ENCODE measurements at regions of chr1 and their contacts with region 1.

Region 1: GRCh38 chr1:116737020-116737854 is 17.0 kb upstream of the CD2 start:
- DNase-seq: peak; percentile 72 to 82 (median 78)
- ATAC-seq: peak; percentile 92
- H3K4me3 ChIP-seq: no peak overlapping the region
- H3K27ac ChIP-seq: no peak overlapping the region
- H3K4me1 ChIP-seq: peaks cover 0 to 8% of the 10 kb centered on the region in 2 experiments; a peak in 2 of 5 replicates
- H3K27me3 ChIP-seq: no peaks in the 10 kb centered on the region
- CTCF ChIP-seq: peak; percentile 95 to 97 (median 97)
- EP300 ChIP-seq: no peak
- POLR2A ChIP-seq: no peak
- RAD21 ChIP-seq: peak; percentile 99

Region 2: DNA sequence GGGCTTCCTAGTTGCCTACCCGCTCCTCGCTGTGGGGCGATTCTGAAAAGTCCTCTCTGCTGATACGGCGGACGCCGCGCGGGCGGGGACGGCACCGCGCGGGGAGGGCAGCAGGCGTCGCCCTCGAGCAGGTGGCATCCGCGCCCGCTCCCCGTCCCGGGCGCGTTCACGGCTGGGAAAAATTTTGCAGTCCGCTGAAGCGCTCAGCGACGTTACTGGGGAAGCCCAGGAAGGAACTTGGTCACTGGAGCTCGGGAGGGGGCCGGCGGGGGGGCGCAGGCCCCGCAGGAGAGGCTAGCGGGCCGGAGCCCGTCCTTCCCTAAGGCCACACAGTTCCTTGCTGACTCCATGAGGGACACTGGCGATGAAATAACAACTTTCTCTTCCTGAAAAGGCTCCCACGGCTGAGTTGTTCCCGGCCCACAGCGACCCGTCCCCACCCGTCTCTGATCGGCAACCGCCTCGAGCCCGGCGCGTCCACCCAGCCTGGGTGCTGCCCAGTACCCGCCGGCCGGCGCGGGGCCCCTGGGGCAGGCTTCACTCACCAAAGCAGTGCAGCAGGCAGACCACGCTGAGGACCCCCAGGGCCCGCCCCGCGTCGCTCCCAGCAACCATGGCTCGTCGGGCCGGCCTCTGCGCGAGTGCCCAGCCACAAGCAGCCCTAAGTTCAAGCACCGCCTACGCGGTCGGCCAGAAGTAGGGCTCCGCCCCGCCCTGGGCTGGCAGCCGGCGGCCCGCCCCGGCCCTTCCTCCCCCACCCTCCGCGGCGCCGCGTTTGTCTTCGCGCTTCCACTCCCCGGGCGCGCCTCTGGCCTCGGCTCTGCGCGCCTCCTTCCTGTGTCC is 166.7 kb before region 1 on chr1 and contains the start of gene CD58:
- CTCF ChIA-PET with region 1: no interaction called
- POLR2A ChIA-PET with region 1: interaction called, 3 read pairs
- in situ Hi-C with region 1: no loop called
- intact Hi-C with region 1: loop called (anchors 1 kb)
- DNase-seq: peak; percentile 95 to 97 (median 95)
- ATAC-seq: peak; percentile 91
- H3K4me3 ChIP-seq: peak within 1 kb of the TSS; percentile 82
- H3K27ac ChIP-seq: peak within 1 kb of the TSS; percentile 88
- H3K4me1 ChIP-seq: peaks cover 45 to 54% of the 10 kb centered on the region in 2 experiments
- H3K27me3 ChIP-seq: no peaks in the 10 kb centered on the region
- CTCF ChIP-seq: peak; percentile 80 to 90 (median 83)
- EP300 ChIP-seq: no peak; the same call in 1 of the 2 replicates
- POLR2A ChIP-seq: peak; percentile 89
- RAD21 ChIP-seq: peak; percentile 52 to 59
- polyA plus RNA-seq, gene CD58: 24.6 to 33.0 TPM

Region 3: DNA sequence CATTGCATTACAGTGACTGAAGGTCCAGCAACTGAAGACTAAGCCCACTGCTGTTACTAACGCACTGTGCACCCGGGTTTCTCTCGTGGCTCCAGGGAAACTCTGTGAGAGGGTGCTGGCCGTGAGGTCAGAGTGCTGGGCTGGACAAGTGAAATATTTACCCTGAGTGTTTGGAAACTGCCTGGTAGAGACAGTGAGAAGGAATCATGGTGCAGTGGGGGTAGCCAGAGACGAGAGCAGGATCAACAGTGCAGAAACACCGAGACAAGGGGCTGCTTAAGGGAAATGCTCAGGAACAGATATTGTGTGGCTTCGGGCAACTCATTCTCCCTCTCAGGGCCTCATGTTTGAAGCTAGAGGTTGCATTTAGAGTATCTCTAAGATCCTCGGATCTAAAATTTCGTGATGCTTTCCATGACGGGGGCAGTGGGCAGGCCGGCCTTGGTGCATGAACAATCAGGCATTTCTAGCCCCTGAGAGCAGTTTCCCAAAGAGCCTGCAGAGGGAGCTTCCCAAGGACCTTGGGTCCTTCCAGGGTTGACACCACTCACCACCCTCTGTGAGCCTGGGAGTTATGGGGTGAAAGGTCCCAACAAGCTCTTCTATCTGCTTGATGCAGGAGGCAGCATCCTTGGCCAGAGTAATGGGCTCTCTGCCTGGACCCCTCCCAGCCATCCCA is 26.7 kb after region 1 on chr1:
- CTCF ChIA-PET with region 1: no interaction called
- POLR2A ChIA-PET with region 1: no interaction called
- in situ Hi-C with region 1: no loop called
- intact Hi-C with region 1: loop called (anchors 2 kb)
- DNase-seq: peak; percentile 70 to 84 (median 78)
- ATAC-seq: peak; percentile 96
- H3K4me3 ChIP-seq: no peak overlapping the region
- H3K27ac ChIP-seq: no peak overlapping the region
- H3K4me1 ChIP-seq: peaks cover 21 to 23% of the 10 kb centered on the region in 2 experiments
- H3K27me3 ChIP-seq: no peaks in the 10 kb centered on the region
- CTCF ChIP-seq: peak; percentile 77 to 90 (median 80)
- EP300 ChIP-seq: no peak
- POLR2A ChIP-seq: no peak
- RAD21 ChIP-seq: peak; percentile 44 to 78

Region 4: GRCh38 chr1:116881879-116882520 is 144.8 kb after region 1 on chr1:
- CTCF ChIA-PET with region 1: interaction called, 3 read pairs
- POLR2A ChIA-PET with region 1: no interaction called
- in situ Hi-C with region 1: no loop called
- intact Hi-C with region 1: loop called (anchors 1 kb)
- DNase-seq: peak; percentile 57 to 85 (median 70)
- ATAC-seq: peak; percentile 92
- H3K4me3 ChIP-seq: no peak overlapping the region
- H3K27ac ChIP-seq: peak overlapping the region; percentile 58
- H3K4me1 ChIP-seq: peaks cover 23 to 36% of the 10 kb centered on the region in 2 experiments
- H3K27me3 ChIP-seq: no peaks in the 10 kb centered on the region
- CTCF ChIP-seq: peak; percentile 86 to 88 (median 88)
- EP300 ChIP-seq: peak; percentile 51
- POLR2A ChIP-seq: no peak
- RAD21 ChIP-seq: peak; percentile 88 to 93

Region 5: GRCh38 chr1:116934586-116935207 is 197.5 kb after region 1 on chr1:
- CTCF ChIA-PET with region 1: interaction called, 4 read pairs
- POLR2A ChIA-PET with region 1: interaction called, 3 read pairs
- in situ Hi-C with region 1: loop called (anchors 10 kb)
- intact Hi-C with region 1: no loop called
- DNase-seq: peak; percentile 41 to 60 (median 54)
- ATAC-seq: peak; percentile 81
- H3K4me3 ChIP-seq: no peak overlapping the region
- H3K27ac ChIP-seq: no peak overlapping the region
- H3K4me1 ChIP-seq: peaks cover 11 to 34% of the 10 kb centered on the region in 2 experiments
- H3K27me3 ChIP-seq: no peaks in the 10 kb centered on the region
- CTCF ChIP-seq: peak; percentile 23 to 68 (median 65); a peak in 5 of 6 replicates
- EP300 ChIP-seq: no peak
- POLR2A ChIP-seq: no peak
- RAD21 ChIP-seq: peak; percentile 29 to 58; a peak in 3 of 4 replicates

Region 6: DNA sequence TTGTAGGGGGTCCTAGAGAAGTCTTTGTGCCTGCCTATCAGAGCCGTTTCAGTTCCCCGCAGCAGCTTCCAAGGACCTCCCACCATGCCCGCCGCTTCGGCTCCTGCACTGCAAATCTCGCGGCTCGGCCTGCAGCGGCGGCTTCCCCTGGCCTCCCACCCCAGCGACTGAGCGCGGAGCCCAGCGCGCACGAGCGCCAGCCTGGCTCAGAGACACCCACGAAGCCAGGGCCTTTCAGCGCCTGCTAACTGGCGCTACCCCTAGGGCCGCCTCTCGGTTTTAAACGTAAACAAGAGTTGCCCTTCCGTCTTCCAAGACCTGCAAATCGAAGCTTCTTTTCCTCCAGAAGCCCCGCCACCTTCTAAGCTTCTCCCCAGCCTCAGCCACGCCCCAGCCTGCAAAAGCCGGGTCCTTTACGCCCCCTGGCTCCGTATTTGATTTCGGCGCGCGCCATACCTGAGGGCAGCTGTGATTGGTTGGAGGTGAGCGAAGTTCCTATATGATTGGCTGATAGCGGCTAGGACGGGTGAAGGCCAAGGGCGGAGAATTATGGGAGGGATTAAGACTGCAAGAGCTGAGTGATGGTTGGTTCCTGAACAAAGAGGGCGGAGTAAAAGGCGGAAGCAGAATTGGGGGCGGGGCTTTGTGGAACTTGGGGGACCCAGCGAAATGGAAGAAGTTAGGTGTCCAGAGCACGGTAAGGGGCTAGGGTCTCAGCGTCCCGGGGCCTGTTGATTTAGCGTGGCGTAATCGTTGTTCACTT is 322.6 kb after region 1 on chr1 and contains the start of gene TTF2:
- CTCF ChIA-PET with region 1: interaction called, 30 read pairs
- POLR2A ChIA-PET with region 1: interaction called, 8 read pairs
- in situ Hi-C with region 1: no loop called
- intact Hi-C with region 1: loop called (anchors 1 kb)
- DNase-seq: peak; percentile 98 to 100 (median 99)
- ATAC-seq: peak; percentile 95
- H3K4me3 ChIP-seq: peak within 1 kb of the TSS; percentile 76
- H3K27ac ChIP-seq: peak within 1 kb of the TSS; percentile 92
- H3K4me1 ChIP-seq: peaks cover 10 to 14% of the 10 kb centered on the region in 2 experiments
- H3K27me3 ChIP-seq: no peaks in the 10 kb centered on the region
- CTCF ChIP-seq: peak; percentile 34 to 46 (median 45); a peak in 4 of 6 replicates
- EP300 ChIP-seq: 0 out of 2 replicates have a peak, but pooled peaks have one; percentile 6
- POLR2A ChIP-seq: peak; percentile 96
- RAD21 ChIP-seq: no peak; a peak in 2 of 4 replicates
- polyA plus RNA-seq, gene TTF2: 9.4 to 10.5 TPM

Region 7: GRCh38 chr1:117284399-117285215 is 547.4 kb after region 1 on chr1:
- CTCF ChIA-PET with region 1: no interaction called
- POLR2A ChIA-PET with region 1: no interaction called
- in situ Hi-C with region 1: loop called (anchors 25 kb)
- intact Hi-C with region 1: loop called (anchors 10 kb)
- DNase-seq: peak; percentile 53 to 70 (median 60)
- ATAC-seq: peak; percentile 90
- H3K4me3 ChIP-seq: no peak overlapping the region
- H3K27ac ChIP-seq: no peak overlapping the region
- H3K4me1 ChIP-seq: no peaks in the 10 kb centered on the region
- H3K27me3 ChIP-seq: no peaks in the 10 kb centered on the region; a peak in 1 of 5 replicates
- CTCF ChIP-seq: peak; percentile 65 to 88 (median 71); a peak in 5 of 6 replicates
- EP300 ChIP-seq: no peak
- POLR2A ChIP-seq: no peak
- RAD21 ChIP-seq: peak; percentile 91 to 95